ENCODE measurements at regions of chr7 and their contacts with region 1.

Region 1: GRCh38 chr7:155618708-155619633 is 25.5 kb upstream of the RBM33 start:
- DNase-seq: peak; percentile 90
- H3K4me3 Mint-ChIP-seq: peak overlapping the region; percentile 62
- H3K27ac Mint-ChIP-seq: peak overlapping the region; percentile 89
- H3K4me1 Mint-ChIP-seq: peaks cover 18% of the 10 kb centered on the region
- H3K27me3 Mint-ChIP-seq: no peaks in the 10 kb centered on the region
- CTCF ChIP-seq: no peak

Region 2: DNA sequence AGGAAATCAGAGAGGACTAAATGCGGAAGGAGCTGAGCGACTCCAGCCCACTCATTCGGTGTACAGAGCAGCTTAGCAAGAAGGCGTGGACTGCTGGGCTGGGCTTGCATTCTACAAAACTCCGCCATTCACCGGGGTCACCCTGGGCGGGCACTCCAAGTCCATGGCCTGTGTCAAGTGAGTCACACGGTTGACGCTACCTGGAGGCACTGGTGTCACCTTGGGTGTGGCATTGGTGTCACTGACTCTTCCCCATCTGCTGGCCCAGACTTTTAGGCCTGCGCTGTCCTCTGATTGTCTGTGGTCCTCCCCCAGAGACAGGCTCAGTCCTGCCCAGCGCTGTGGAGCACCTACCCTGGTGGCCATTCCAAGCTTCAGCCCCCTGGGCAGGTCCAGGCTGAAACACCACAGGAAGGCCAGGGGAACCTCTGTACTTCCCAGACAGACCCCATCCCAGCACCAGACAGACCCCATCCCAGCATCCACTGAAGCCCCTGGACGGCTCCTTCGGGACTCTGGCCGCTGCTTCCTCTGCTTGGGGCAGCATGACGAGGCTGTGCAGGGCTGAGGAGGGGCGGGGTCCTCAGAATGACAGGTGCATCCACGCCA is 42.0 kb before region 1 on chr7:
- CTCF ChIA-PET with region 1: no interaction called
- intact Hi-C with region 1: loop called (anchors 2 kb)
- DNase-seq: peak; percentile 66
- H3K4me3 Mint-ChIP-seq: peak overlapping the region; percentile 64
- H3K27ac Mint-ChIP-seq: peak overlapping the region; percentile 49
- H3K4me1 Mint-ChIP-seq: peaks cover 11% of the 10 kb centered on the region
- H3K27me3 Mint-ChIP-seq: peaks cover 17% of the 10 kb centered on the region
- CTCF ChIP-seq: no peak

Measured in Calu3 (cell line).